ENCODE measurements at regions of chr2 and their contacts with region 1.

Region 1: GRCh38 chr2:38377050-38377828 is at the start of gene ATL2:
- DNase-seq: peak; percentile 87
- ATAC-seq: peak; percentile 87
- H3K4me3 Mint-ChIP-seq: peak within 1 kb of the TSS; percentile 91
- H3K27ac Mint-ChIP-seq: peak within 1 kb of the TSS; percentile 86
- H3K4me1 Mint-ChIP-seq: peaks cover 43% of the 10 kb centered on the region
- H3K27me3 Mint-ChIP-seq: peaks cover 4% of the 10 kb centered on the region
- CTCF ChIP-seq: no peak
- total RNA-seq, gene ATL2: 40.0 and 43.2 TPM in 2 replicates

Region 2: DNA sequence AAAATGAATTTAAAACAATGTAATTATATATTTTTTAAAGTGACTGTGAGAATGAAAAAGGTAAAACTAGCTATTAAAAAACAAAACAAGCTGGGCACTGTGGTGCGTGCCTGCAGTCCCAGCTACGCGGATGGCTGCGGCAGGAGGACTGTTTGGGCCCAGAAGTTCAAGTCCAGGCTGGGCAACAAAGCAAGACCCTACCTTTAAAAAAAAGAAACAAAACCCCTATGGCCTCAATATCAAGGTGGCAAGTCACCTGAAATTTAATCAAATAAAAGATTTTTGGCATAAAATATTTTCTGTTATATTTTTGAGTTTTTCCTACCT is 1364.0 kb before region 1 on chr2:
- CTCF ChIA-PET with region 1: no interaction called
- POLR2A ChIA-PET with region 1: no interaction called
- intact Hi-C with region 1: loop called (anchors 5 kb)
- DNase-seq: no peak
- ATAC-seq: peak; percentile 31
- H3K4me3 Mint-ChIP-seq: no peak overlapping the region
- H3K27ac Mint-ChIP-seq: peak overlapping the region; percentile 80
- H3K4me1 Mint-ChIP-seq: peaks cover 44% of the 10 kb centered on the region
- H3K27me3 Mint-ChIP-seq: no peaks in the 10 kb centered on the region
- CTCF ChIP-seq: no peak

Region 3: DNA sequence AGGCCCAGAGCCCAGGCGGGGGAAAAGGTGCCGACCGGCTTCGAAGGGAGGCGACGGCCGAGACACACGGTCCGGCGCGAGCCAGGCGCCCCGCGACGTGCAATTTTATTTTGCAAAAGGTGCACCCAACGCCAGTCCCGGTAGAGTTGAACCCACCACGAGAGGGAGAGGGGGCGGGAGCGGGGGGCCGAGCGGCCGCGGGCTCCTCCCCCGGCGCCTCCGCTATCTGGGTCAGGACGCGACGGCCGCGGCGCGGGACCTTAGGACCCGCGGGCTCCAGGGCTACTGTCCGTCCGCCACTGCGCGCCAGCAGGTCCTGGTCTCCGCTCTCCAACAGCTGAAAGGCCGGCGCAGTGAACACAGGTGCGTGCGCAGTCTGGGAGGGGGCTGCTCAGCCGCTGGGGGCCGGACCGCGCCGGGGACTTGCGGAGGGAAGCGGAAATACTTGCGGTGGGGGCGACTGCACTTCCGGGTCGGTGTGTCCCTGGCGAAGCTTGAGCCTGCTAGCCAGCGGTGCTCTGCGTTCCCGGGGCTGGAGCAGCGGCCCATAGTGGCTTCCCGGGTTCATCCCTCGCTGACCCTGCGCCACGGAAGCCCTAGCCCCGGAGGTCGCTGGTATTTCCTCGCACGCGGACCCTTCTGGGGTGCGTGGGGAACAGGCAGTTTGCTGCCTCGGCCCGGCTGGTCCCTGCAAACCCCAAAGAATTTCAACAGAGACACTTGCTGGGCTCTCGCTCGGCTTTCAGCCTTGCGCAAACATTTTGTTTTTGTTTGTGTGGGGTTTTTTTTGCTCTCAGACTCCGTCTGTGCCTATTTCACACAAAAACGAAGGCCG is 452.0 kb before region 1 on chr2 and contains the start of gene RMDN2:
- CTCF ChIA-PET with region 1: no interaction called
- POLR2A ChIA-PET with region 1: no interaction called
- intact Hi-C with region 1: loop called (anchors 2 kb)
- DNase-seq: peak; percentile 86
- ATAC-seq: peak; percentile 91
- H3K4me3 Mint-ChIP-seq: peak within 1 kb of the TSS; percentile 96
- H3K27ac Mint-ChIP-seq: peak within 1 kb of the TSS; percentile 93
- H3K4me1 Mint-ChIP-seq: peaks cover 28% of the 10 kb centered on the region
- H3K27me3 Mint-ChIP-seq: no peaks in the 10 kb centered on the region
- CTCF ChIP-seq: no peak
- total RNA-seq, gene RMDN2: 7.0 TPM in 2 replicates

Region 4: GRCh38 chr2:38498045-38498481 is 120.8 kb after region 1 on chr2:
- CTCF ChIA-PET with region 1: interaction called, 3 read pairs
- POLR2A ChIA-PET with region 1: no interaction called
- intact Hi-C with region 1: loop called (anchors 2 kb)
- DNase-seq: peak; percentile 21
- ATAC-seq: peak; percentile 98
- H3K4me3 Mint-ChIP-seq: peak overlapping the region; percentile 63
- H3K27ac Mint-ChIP-seq: peak overlapping the region; percentile 74
- H3K4me1 Mint-ChIP-seq: peaks cover 11% of the 10 kb centered on the region
- H3K27me3 Mint-ChIP-seq: peaks cover 5% of the 10 kb centered on the region
- CTCF ChIP-seq: no peak

Region 5: GRCh38 chr2:38665854-38666555 is 288.8 kb after region 1 on chr2 and contains the start of gene GALM:
- CTCF ChIA-PET with region 1: no interaction called
- POLR2A ChIA-PET with region 1: no interaction called
- intact Hi-C with region 1: loop called (anchors 10 kb)
- DNase-seq: peak; percentile 23
- ATAC-seq: peak; percentile 78
- H3K4me3 Mint-ChIP-seq: peak within 1 kb of the TSS; percentile 80
- H3K27ac Mint-ChIP-seq: peak within 1 kb of the TSS; percentile 59
- H3K4me1 Mint-ChIP-seq: peaks cover 26% of the 10 kb centered on the region
- H3K27me3 Mint-ChIP-seq: no peaks in the 10 kb centered on the region
- CTCF ChIP-seq: no peak
- total RNA-seq, gene GALM: 3.5 and 5.4 TPM in 2 replicates

Region 6: DNA sequence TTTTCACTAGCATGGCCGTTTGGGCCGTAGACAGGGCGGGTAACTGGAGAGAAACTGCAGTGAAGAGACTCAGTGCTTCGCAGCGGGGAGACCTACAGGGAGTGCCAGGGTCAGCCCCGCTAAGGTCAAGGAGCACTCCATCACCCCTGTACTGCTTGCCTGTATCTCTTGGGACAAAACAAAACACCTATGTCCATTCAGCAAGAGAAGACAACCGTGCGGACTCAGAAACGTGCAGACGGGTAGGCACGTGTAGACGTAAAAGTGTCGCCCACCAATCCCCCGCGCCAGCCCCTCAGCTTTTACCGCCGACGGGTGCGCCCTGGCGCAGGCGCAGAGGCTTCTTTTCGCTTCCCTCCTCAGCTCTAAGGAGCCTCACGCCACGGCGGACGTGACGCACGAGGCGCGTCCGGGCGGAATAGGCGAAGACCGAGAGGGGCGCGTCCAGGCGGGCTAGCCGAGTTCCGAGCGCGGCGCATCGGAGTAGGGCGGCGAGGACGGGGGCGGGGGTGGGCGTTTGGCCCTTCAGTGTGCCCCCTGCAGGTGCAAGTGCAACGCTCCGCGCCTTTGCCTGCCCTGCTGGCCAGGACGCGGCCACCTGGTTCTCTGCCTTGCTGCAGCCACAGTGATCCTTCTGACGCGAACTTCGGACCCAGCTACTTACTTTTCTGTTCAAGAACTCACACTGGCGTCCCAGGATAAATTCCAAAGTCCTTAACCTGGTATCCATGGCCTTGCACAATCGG is 746.9 kb after region 1 on chr2:
- CTCF ChIA-PET with region 1: no interaction called
- POLR2A ChIA-PET with region 1: no interaction called
- intact Hi-C with region 1: loop called (anchors 2 kb)
- DNase-seq: peak; percentile 93
- ATAC-seq: peak; percentile 67
- H3K4me3 Mint-ChIP-seq: peak overlapping the region; percentile 90
- H3K27ac Mint-ChIP-seq: peak overlapping the region; percentile 92
- H3K4me1 Mint-ChIP-seq: peaks cover 56% of the 10 kb centered on the region
- H3K27me3 Mint-ChIP-seq: no peaks in the 10 kb centered on the region
- CTCF ChIP-seq: no peak